Sciatic nerve (tissue), 2 donors: ENCODE measurements at regions of chr5 and their contacts with region 1.

Region 1: DNA sequence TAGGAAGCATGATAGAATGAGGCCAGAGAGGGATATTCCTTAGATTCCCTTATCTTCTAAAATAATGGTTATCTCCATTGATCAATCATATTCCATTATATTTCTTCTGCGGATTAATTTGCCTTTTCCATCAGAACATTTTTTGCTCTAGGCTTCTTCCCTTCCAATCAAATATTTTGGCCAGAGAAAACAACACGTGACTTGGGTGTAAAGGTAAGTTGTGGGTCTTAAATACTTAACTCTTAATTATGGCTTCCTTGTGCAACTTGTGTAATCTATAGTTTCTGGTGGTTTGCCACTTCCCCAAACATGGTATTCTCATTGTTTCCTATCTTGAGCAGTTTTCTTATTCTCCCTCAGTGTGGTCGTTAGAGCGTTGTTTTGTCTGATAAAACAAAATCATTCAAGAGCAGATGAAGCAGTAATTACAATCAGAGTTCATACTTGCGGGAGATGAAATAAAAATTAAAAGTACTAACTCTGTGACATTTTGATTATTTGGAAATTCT is 889.3 kb downstream of the MAT2B start:
- DNase-seq: no peak
- ATAC-seq: no peak

Region 2: GRCh38 chr5:164097747-164098146 is 297.0 kb before region 1 on chr5:
- intact Hi-C with region 1: no loop called
- DNase-seq: no peak
- ATAC-seq: no peak

Region 3: DNA sequence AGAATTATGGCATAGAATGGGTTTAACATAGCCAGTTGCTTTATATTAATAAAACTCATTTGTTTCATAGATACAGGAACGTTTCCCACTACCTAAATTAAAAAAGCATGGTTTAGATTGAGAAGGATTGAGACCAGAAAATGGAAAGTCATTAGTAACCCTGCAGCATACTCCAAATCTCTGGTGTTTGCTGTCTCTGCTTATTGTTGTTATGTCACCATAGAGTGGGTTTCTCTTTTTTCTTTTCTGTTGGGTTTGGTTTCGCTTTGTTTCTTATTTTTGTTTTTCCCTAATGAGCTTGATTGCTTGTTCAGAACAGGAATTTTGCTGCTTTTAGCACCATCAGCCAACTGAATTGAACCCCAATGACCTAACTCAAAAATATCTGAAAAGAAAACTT is 145.4 kb after region 1 on chr5:
- intact Hi-C with region 1: no loop called
- DNase-seq: no peak
- ATAC-seq: no peak

Region 4: GRCh38 chr5:165375201-165375600 is 980.5 kb after region 1 on chr5:
- intact Hi-C with region 1: loop called (anchors 5 kb)
- DNase-seq: no peak
- ATAC-seq: no peak